ENCODE measurements at regions of chr1 and their contacts with region 1.

Region 1: DNA sequence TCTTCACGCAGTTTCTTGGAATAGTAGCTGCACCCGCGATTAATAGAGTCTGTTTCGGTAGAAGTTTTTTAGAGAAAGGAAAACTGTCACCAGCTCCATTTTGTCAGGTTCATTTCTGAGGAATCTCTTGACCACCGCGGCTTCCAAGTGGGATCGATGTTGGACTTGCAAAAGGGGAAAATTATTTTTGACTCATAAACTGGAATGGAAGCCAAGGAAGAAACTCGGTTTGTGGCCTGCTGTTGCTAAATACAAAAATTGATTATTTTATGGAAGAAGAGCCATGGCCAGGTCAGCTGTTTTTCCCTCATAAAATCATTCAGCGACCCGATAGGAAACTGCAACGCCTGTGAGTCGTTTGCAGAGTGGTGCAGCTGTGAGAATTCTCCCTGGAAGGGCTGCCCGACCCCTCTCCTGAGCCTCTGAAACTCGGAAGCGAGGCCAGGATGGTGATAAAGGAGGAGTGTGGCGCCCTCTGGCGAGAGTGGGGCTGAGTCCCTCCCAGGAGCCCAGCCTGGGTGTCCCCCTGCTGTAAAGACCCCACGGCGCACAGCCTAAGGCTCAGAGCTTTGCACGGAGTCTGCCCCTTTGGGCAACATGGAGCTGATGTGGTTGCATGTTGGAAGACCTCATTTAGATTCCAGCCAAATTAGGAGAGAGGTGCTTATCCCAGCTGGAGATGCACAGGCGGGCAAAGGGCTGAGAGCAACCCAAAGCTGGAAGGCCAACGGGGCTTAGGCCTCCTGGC is 83.6 kb upstream of the SLC25A33 start:
- DNase-seq: peak; percentile 63 to 72 (median 63)
- H3K4me3 ChIP-seq: no peak overlapping the region
- H3K27ac ChIP-seq: no peak overlapping the region
- H3K4me1 ChIP-seq: peaks cover 0 to 2% (median 0%) of the 10 kb centered on the region in 4 experiments
- H3K27me3 ChIP-seq: peaks cover 0 to 4% (median 0%) of the 10 kb centered on the region in 5 experiments

Region 2: GRCh38 chr1:9270290-9270883 is 185.3 kb before region 1 on chr1:
- CTCF ChIA-PET with region 1: interaction called, 23 read pairs
- POLR2A ChIA-PET with region 1: no interaction called
- DNase-seq: no peak
- H3K4me3 ChIP-seq: no peak overlapping the region
- H3K27ac ChIP-seq: no peak overlapping the region
- H3K4me1 ChIP-seq: peaks cover 0 to 15% (median under 1%) of the 10 kb centered on the region in 4 experiments
- H3K27me3 ChIP-seq: peaks cover 0 to 3% (median 0%) of the 10 kb centered on the region in 5 experiments

Region 3: GRCh38 chr1:9281908-9282695 is 173.6 kb before region 1 on chr1:
- CTCF ChIA-PET with region 1: interaction called, 98 read pairs
- POLR2A ChIA-PET with region 1: no interaction called
- DNase-seq: peak in 2 of 3 donors; percentile 29 to 43
- H3K4me3 ChIP-seq: no peak overlapping the region
- H3K27ac ChIP-seq: no peak overlapping the region
- H3K4me1 ChIP-seq: peaks cover 0 to 21% (median 15%) of the 10 kb centered on the region in 4 experiments
- H3K27me3 ChIP-seq: peaks cover 0 to 15% (median 3%) of the 10 kb centered on the region in 5 experiments

Region 4: GRCh38 chr1:9292361-9293240 is 163.1 kb before region 1 on chr1 and contains the start of gene SPSB1:
- CTCF ChIA-PET with region 1: interaction called, 98 read pairs
- POLR2A ChIA-PET with region 1: interaction called, 4 read pairs
- DNase-seq: peak; percentile 74 to 83 (median 81)
- H3K4me3 ChIP-seq: peak within 1 kb of the TSS; percentile 32 to 73 (median 67)
- H3K27ac ChIP-seq: no peak within 1 kb of the TSS
- H3K4me1 ChIP-seq: peaks cover 0 to 27% (median 21%) of the 10 kb centered on the region in 4 experiments
- H3K27me3 ChIP-seq: peaks cover 0 to 32% (median 13%) of the 10 kb centered on the region in 5 experiments

Region 5: DNA sequence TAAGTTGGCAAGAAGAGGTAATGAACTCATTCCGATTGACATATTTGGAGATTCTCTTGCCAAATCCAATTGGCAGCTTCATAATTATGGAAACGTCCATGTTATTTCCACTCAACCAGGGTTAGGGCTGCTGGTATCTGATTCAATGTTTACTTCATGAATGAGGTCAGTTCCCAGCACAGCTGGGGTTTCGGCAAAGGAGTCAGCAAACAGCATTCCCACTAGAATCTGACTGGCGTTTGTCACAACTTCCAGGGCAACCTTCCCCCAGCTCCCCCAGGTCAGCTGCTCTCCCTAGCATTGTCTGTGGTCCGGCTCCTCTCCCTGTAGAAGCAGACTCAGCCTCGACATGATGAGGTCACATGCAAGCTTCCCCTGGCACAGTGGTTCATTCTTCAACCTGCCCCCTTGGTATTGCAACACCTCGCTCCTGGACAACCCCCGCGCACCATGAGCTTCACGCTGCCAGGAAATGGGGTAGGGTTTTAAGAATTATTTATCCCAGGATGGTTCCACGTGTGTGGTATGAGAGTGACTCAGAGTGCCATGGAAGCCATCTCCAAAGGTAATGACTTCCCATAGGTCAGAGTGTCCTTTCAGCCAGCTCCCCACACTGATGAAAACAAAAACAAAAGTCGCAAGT is 17.1 kb before region 1 on chr1:
- CTCF ChIA-PET with region 1: interaction called, 18 read pairs
- POLR2A ChIA-PET with region 1: no interaction called
- DNase-seq: peak in 1 of 3 donors; percentile 19
- H3K4me3 ChIP-seq: no peak overlapping the region
- H3K27ac ChIP-seq: no peak overlapping the region
- H3K4me1 ChIP-seq: peaks cover 0 to 17% (median under 1%) of the 10 kb centered on the region in 4 experiments
- H3K27me3 ChIP-seq: peaks cover 0 to 4% (median 0%) of the 10 kb centered on the region in 5 experiments

Measured in common myeloid progenitor, CD34-positive (primary cell).